ENCODE measurements at regions of chr9 and their contacts with region 1.

Region 1: GRCh38 chr9:130701056-130702022 is 7.8 kb downstream of the EXOSC2 start:
- DNase-seq: peak; percentile 65 to 71 (median 65)
- ATAC-seq: peak; percentile 70 to 73 (median 72)
- H3K4me3 ChIP-seq: no peak overlapping the region
- H3K27ac ChIP-seq: no peak overlapping the region
- H3K4me1 ChIP-seq: peaks cover 0 to 14% (median 6%) of the 10 kb centered on the region in 4 donors
- H3K27me3 ChIP-seq: no peaks in the 10 kb centered on the region
- CTCF ChIP-seq: peak; percentile 61 to 91 (median 84)
- POLR2A ChIP-seq: no peak

Region 2: GRCh38 chr9:130946778-130947617 is 245.7 kb after region 1 on chr9:
- intact Hi-C with region 1: loop called in 1 of 2 experiments (anchors 5 kb)
- DNase-seq: no peak
- ATAC-seq: no peak
- H3K4me3 ChIP-seq: no peak overlapping the region
- H3K27ac ChIP-seq: no peak overlapping the region
- H3K4me1 ChIP-seq: no peaks in the 10 kb centered on the region
- H3K27me3 ChIP-seq: peaks cover 0 to 4% of the 10 kb centered on the region in 2 donors
- CTCF ChIP-seq: no peak
- POLR2A ChIP-seq: no peak